ENCODE measurements at regions of chr1 and their contacts with region 1.

Region 1: DNA sequence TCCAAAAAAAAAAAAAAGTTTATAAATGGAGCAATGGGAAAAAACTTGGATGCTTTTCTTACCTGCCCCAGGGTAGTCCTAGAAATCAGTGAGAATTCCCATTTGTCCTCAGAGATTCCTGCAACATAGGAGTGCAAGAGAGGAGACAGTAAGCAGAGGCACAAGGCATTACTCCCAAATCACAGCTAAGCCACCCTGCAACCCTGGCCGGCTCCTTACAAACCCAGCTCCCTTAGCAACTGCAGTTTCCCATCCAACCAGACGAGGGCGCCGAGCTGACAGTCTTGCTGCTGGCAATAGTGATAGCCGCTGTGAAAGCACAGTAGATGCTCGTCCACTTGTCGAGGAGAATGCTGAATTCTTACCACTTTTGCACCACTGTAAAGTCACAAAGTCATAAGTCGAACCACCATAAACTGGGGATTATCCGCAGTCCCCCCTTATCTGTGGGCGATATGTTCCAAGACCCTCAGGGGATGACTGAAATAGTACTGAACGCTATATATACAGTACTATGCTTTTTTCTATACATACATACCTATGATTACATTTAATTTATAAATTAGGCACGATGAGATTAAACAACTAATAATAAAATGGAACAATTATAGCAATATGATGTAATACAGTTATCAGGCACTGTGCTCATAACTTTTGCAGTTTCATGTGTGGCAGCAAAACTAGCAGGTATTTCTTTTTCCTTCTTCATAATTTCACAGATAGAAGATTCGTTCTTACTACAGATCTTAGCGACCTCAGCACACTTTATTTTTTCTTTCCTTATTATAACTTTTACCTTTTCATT is 6.0 kb upstream of the PITHD1 start:
- DNase-seq: peak; percentile 67
- ATAC-seq: peak; percentile 90
- H3K4me3 ChIP-seq: no peak overlapping the region
- H3K27ac ChIP-seq: no peak overlapping the region
- H3K4me1 ChIP-seq: peaks cover 49% of the 10 kb centered on the region
- H3K27me3 ChIP-seq: no peaks in the 10 kb centered on the region
- CTCF ChIP-seq: peak; percentile 95
- EP300 ChIP-seq: no peak
- POLR2A ChIP-seq: no peak
- RAD21 ChIP-seq: peak; percentile 78

Region 2: GRCh38 chr1:23790696-23791515 is 18.7 kb after region 1 on chr1 and contains the start of gene LYPLA2:
- CTCF ChIA-PET with region 1: no interaction called
- POLR2A ChIA-PET with region 1: interaction called, 154 read pairs
- in situ Hi-C with region 1: no loop called
- intact Hi-C with region 1: no loop called
- DNase-seq: peak; percentile 85
- ATAC-seq: peak; percentile 86
- H3K4me3 ChIP-seq: peak within 1 kb of the TSS; percentile 88 to 98 (median 97)
- H3K27ac ChIP-seq: peak within 1 kb of the TSS; percentile 69
- H3K4me1 ChIP-seq: peaks cover 34% of the 10 kb centered on the region
- H3K27me3 ChIP-seq: no peaks in the 10 kb centered on the region; a peak in 1 of 5 replicates
- CTCF ChIP-seq: 0 out of 2 replicates have a peak, but pooled peaks have one; percentile 10
- EP300 ChIP-seq: no peak
- POLR2A ChIP-seq: peak in 1 of 2 experiments; percentile 47; a peak in 1 of 4 replicates
- RAD21 ChIP-seq: no peak
- total RNA-seq, gene LYPLA2: 73.2 and 90.3 TPM in 2 replicates

Region 3: GRCh38 chr1:23800400-23801337 is 28.4 kb after region 1 on chr1 and contains the start of gene GALE:
- CTCF ChIA-PET with region 1: interaction called, 4 read pairs
- POLR2A ChIA-PET with region 1: interaction called, 154 read pairs
- in situ Hi-C with region 1: no loop called
- intact Hi-C with region 1: loop called (anchors 1 kb)
- DNase-seq: peak; percentile 89
- ATAC-seq: peak; percentile 75
- H3K4me3 ChIP-seq: peak within 1 kb of the TSS; percentile 65 to 92 (median 90)
- H3K27ac ChIP-seq: peak within 1 kb of the TSS; percentile 95
- H3K4me1 ChIP-seq: peaks cover 66% of the 10 kb centered on the region
- H3K27me3 ChIP-seq: no peaks in the 10 kb centered on the region; a peak in 1 of 5 replicates
- CTCF ChIP-seq: no peak
- EP300 ChIP-seq: peak in 1 of 2 experiments; percentile 34; a peak in 1 of 4 replicates
- POLR2A ChIP-seq: peak in 1 of 2 experiments; percentile 59; a peak in 2 of 4 replicates
- RAD21 ChIP-seq: peak; percentile 60; the same call in 1 of the 2 replicates
- total RNA-seq, gene GALE: 85.2 and 86.6 TPM in 2 replicates

Region 4: DNA sequence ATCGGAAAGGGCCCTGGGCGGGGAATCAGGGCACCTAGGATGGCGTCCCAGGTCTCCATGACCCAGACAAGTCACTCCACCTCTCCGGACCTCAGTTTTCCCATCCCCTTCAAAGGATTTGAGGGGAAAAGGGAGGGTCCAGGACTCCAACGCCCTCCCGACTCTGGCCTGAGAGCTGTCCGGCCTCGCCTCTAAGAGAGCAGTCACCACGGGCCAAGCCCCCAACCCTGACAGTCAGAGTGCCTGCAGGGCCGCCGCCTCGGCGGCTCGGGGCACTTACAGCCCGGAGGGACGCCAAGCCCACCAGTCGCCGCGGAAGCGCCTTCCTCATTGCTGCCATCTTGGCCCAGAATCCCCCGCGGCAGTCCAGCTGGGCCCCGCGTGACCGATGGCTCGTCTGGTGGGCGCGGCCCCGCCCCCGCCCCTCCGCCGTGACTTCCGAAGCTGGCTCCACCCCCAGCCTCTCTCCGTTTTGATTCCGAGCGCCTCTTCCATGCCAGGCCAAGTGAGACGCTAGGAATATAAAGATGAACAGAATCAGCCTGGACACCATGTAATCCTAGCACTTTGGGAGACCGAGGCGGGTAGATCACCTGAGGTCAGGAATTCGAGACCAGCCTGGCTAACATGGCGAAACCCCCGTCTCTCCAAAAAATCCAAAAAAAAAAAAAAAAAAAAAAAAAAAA is 53.0 kb after region 1 on chr1 and contains the start of gene HMGCL:
- CTCF ChIA-PET with region 1: no interaction called
- POLR2A ChIA-PET with region 1: interaction called, 30 read pairs
- in situ Hi-C with region 1: no loop called
- intact Hi-C with region 1: no loop called
- DNase-seq: peak; percentile 80
- ATAC-seq: peak; percentile 94
- H3K4me3 ChIP-seq: peak within 1 kb of the TSS; percentile 90 to 100 (median 99)
- H3K27ac ChIP-seq: peak within 1 kb of the TSS; percentile 99
- H3K4me1 ChIP-seq: peaks cover 24% of the 10 kb centered on the region
- H3K27me3 ChIP-seq: no peaks in the 10 kb centered on the region; a peak in 1 of 5 replicates
- CTCF ChIP-seq: peak; percentile 9; the same call in 1 of the 2 replicates
- EP300 ChIP-seq: 0 out of 4 replicates have a peak, but pooled peaks of 1 of the 2 experiments have one; percentile 35
- POLR2A ChIP-seq: peak; percentile 86 to 95
- RAD21 ChIP-seq: no peak
- total RNA-seq, gene HMGCL: 21.3 and 30.0 TPM in 2 replicates

Region 5: DNA sequence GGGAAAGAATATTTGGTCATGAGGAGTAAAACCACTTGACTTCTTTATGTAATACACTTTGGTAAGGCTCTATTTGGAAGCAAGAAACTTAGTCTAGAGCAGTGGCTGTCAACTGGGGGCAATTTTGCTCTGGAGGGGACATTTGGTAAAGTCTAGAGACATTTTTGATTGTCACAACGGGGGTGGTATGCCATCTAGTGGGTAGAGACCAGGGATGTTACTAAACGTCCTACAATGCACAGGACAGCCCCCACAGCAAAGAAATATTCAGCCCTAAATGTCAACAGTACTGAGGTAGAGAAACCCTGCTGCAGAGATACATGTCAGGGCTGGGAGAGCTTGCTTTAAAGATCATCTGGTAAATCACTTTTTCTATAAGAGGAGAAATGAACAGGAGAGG is 82.3 kb after region 1 on chr1:
- CTCF ChIA-PET with region 1: interaction called, 10 read pairs
- POLR2A ChIA-PET with region 1: no interaction called
- in situ Hi-C with region 1: no loop called
- intact Hi-C with region 1: no loop called
- DNase-seq: peak; percentile 20
- ATAC-seq: peak; percentile 52; the same call in 1 of the 3 replicates
- H3K4me3 ChIP-seq: no peak overlapping the region
- H3K27ac ChIP-seq: no peak overlapping the region
- H3K4me1 ChIP-seq: no peaks in the 10 kb centered on the region
- H3K27me3 ChIP-seq: no peaks in the 10 kb centered on the region
- CTCF ChIP-seq: peak; percentile 66
- EP300 ChIP-seq: no peak
- POLR2A ChIP-seq: no peak
- RAD21 ChIP-seq: 0 out of 2 replicates have a peak, but pooled peaks have one; percentile 32

Region 6: DNA sequence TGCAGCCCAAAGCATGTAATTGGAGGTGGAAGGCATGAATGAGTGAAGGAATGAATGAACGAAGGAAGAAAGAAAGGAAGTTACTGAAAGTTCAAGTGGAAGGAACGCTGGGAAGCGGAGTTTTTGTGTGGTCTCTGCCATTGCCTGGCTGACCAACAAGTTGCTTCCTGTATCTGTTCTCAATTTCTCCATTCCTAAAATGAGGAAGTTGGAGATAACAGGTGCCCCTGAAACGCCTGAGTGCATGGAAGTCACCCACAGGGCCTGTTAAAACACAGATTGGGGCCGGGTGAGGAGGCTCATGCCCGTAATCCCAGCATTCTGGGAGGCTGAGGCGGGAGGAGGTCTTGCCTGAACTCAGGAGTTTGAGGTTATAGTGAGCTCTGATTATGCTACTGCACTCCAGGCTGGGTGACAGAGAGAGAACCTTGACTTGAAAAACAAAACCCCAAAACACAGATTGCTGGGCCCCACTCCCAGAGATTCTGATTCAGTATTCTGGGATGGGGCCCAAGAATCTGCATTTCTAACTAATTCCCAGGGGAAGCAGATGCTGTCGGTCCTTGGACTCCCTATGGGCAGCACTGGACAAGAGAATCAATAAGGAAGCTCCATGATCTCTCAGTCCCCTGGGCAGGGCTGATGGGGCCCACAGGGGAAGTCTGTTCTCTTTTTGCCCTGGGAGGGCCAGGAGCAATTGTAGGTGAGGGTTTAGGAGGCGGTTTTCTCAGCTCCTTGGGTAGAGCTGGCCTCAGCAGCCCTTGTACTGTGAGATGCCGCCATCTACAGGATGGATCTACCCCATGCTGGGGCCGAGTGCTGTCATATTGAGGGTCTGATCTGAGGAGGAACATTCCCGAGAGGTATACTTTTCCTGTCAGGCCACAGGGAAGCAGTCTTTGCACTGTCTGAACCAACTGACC is 144.2 kb after region 1 on chr1:
- CTCF ChIA-PET with region 1: interaction called, 9 read pairs
- POLR2A ChIA-PET with region 1: interaction called, 4 read pairs
- in situ Hi-C with region 1: no loop called
- intact Hi-C with region 1: loop called (anchors 1 kb)
- DNase-seq: peak; percentile 60
- ATAC-seq: peak; percentile 95
- H3K4me3 ChIP-seq: no peak overlapping the region
- H3K27ac ChIP-seq: no peak overlapping the region
- H3K4me1 ChIP-seq: peaks cover 39% of the 10 kb centered on the region
- H3K27me3 ChIP-seq: peaks cover 2 to 9% of the 10 kb centered on the region in 2 experiments; a peak in 2 of 5 replicates
- CTCF ChIP-seq: peak; percentile 94
- EP300 ChIP-seq: no peak
- POLR2A ChIP-seq: no peak
- RAD21 ChIP-seq: peak; percentile 84

Region 7: DNA sequence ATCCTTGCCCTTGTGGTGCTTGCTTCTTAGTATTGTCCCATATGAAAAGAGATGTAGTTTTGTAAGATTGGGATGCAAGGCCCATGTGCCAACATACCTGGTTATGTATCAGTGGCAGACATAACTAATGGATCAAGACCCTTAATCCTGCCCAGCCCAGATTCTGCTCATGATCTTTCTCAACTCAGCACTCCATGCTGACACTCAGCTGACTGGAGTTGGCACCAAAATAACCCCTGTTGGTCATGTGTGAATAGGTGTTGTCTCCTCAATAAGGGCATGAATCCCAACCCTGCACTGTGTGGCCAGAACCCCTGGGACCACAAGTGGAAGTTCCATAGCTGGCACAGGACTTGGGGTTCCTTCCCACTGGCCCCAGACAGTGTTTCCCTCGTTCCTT is 154.8 kb after region 1 on chr1:
- CTCF ChIA-PET with region 1: no interaction called
- POLR2A ChIA-PET with region 1: no interaction called
- in situ Hi-C with region 1: no loop called
- intact Hi-C with region 1: no loop called
- DNase-seq: no peak
- ATAC-seq: no peak
- H3K4me3 ChIP-seq: no peak overlapping the region
- H3K27ac ChIP-seq: no peak overlapping the region
- H3K4me1 ChIP-seq: peaks cover 11% of the 10 kb centered on the region
- H3K27me3 ChIP-seq: peaks cover 0 to 14% of the 10 kb centered on the region in 2 experiments; a peak in 3 of 5 replicates
- CTCF ChIP-seq: no peak
- EP300 ChIP-seq: no peak
- POLR2A ChIP-seq: no peak
- RAD21 ChIP-seq: no peak

Region 8: DNA sequence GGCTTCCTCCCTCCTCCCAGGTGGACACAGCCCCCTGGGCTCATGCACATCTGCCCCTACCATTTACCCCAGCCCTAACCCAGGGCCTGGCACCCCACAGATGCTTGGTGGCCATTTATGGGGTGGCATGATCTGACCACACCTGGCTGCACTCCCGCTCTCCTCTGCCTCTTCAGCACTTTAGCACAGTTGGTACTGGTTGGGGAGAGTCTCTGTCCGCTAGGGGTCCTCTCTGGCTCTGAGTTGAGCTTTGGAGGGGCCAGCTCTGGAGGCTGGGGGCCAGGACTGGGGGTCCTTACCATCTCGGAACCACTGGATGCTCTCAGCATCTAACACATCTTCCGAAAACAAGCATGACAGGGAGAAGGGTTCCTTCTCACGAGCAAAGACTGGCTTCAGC is 322.3 kb after region 1 on chr1:
- CTCF ChIA-PET with region 1: no interaction called
- POLR2A ChIA-PET with region 1: no interaction called
- in situ Hi-C with region 1: no loop called
- intact Hi-C with region 1: no loop called
- DNase-seq: no peak
- ATAC-seq: no peak
- H3K4me3 ChIP-seq: no peak overlapping the region
- H3K27ac ChIP-seq: no peak overlapping the region
- H3K4me1 ChIP-seq: peaks cover 25% of the 10 kb centered on the region
- H3K27me3 ChIP-seq: no peaks in the 10 kb centered on the region
- CTCF ChIP-seq: no peak
- EP300 ChIP-seq: no peak
- POLR2A ChIP-seq: no peak
- RAD21 ChIP-seq: no peak

Measured in HepG2 (cell line).